Psoas muscle (tissue), 8 donors: ENCODE measurements at regions of chr14 and their contacts with region 1.

Region 1: DNA sequence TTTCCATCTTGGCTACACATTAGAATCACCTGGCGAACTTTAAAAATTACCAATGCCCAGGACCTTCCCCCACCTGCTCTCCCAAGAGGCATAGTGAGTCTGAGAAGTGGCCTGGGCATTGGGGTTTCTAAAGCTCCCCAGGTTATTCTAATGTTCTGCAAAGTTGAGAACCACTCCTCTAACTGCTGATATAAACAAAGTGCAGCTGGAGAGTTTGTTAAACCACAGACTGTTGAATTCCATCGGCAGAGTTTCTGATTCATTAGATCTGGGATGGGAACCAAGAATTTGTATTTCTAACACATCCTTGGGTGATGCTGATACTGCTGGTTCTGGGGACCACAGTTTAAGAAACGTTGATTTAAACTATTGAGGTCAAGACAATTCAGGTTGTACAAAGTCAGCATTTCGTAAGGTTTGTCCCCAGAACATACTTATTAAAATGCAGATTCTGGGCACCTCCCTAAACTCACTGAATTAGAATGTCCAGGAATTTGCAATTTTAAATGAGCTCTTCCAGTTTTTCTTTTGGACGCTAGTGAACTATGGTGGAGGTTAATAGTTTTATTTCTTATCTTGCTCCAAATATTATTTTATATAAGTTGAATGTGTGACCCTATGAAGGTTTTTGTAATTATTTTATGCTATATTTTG is 309.1 kb downstream of the NRXN3 start:
- DNase-seq: no peak
- ATAC-seq: no peak
- H3K4me3 ChIP-seq: no peak overlapping the region
- H3K27ac ChIP-seq: no peak overlapping the region
- H3K4me1 ChIP-seq: no peaks in the 10 kb centered on the region
- H3K27me3 ChIP-seq: peaks cover 0 to 3% (median 0%) of the 10 kb centered on the region in 3 donors
- CTCF ChIP-seq: no peak

Region 2: DNA sequence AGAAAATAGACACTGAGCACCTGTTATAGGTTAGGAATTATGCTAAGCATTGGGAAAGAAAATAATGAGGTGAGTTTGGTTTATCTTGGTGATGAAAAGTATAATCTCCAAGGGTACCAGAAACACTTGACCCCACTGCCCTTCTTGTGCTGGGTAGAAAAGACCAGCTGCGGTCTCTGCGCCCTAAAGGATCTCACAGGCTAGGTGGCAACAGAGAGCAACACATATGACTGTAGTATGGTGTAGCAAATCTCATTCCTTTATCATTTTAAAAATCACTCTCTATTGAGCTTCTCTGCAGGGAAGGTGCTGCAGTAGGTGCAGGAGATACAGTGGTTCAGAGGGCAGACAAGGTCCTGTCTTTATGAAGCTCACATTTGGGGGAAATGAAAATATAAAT is 282.9 kb before region 1 on chr14:
- intact Hi-C with region 1: loop called in 1 of 2 experiments (anchors 5 kb)
- DNase-seq: no peak
- ATAC-seq: no peak
- H3K4me3 ChIP-seq: no peak overlapping the region
- H3K27ac ChIP-seq: no peak overlapping the region
- H3K4me1 ChIP-seq: no peaks in the 10 kb centered on the region
- H3K27me3 ChIP-seq: peaks cover 0 to 1% (median under 1%) of the 10 kb centered on the region in 3 donors
- CTCF ChIP-seq: no peak

Region 3: DNA sequence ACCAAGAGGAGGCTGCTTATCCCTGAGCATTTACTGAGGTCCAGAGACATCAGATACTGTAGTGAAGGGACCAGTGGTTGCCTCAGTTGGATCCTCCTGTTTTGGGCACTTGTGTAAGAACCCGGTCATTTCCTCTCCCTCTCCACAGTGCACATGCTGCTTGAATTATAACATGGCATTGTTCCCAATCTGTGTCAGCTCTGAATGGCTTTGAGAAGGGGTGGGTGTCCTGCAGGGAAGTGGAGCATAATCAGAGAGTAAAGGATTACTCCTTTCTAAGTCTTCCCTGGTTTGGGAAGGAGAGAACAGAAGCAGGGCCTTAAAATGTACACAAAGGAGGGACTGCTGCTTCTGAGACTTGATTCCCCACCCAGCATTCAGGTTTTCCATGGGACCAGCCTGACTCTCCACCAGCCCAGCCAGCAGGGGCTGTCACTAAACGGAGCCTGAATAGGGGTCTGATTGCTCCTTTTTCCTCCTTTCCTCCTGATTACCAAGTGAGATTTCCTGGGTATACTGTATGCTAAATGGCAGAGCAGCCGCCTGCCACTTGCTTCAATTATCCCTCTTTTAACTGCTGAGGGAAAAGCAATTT is 230.7 kb before region 1 on chr14:
- intact Hi-C with region 1: no loop called
- DNase-seq: no peak
- ATAC-seq: no peak
- H3K4me3 ChIP-seq: no peak overlapping the region
- H3K27ac ChIP-seq: no peak overlapping the region
- H3K4me1 ChIP-seq: no peaks in the 10 kb centered on the region
- H3K27me3 ChIP-seq: no peaks in the 10 kb centered on the region
- CTCF ChIP-seq: no peak